ENCODE measurements at regions of chr9 and their contacts with region 1.

Region 1: DNA sequence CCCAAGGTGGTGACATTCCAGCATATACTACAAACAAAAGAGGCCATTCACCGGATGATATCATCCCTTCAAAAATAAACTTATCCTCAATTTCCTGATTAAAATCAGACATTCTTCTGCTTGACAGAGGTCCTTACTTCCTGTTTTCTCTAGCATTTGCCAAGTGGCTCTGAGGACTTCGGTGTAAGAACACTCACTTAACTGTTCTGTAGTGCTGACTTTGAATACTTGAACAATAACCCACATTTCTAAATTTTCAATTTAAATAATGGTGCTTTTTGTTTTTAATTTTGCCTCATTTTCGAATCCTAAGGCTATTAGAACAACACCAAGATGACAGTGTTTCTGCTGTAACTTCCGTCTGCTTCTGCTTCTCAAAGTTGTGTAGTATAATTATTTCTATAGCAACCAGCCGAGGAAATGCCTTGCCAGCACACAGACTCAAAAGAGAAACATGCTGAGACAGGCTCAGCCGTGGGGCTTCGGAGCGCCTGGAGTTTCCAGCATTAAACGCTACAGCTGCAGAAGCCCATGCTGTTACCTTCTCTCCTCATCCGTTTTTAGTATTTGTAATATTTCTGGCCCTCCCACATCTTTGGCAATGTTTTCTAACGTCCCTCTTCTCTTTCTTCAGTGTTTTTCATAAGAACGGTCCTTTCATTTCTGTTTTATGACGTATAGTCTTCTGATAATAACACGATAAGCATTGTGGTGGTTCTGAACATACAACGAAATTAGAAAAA is 19.5 kb upstream of the ANXA1 start:
- DNase-seq: peak; percentile 71 to 78 (median 76)
- ATAC-seq: peak; percentile 76 to 97 (median 93)
- H3K4me3 ChIP-seq: peak overlapping the region; percentile 7 to 64 (median 52)
- H3K27ac ChIP-seq: peak overlapping the region; percentile 6 to 94 (median 76)
- H3K4me1 ChIP-seq: peaks cover 0 to 24% (median 13%) of the 10 kb centered on the region in 12 donors
- H3K27me3 ChIP-seq: no peaks in the 10 kb centered on the region
- CTCF ChIP-seq: no peak
- POLR2A ChIP-seq: no peak

Region 2: DNA sequence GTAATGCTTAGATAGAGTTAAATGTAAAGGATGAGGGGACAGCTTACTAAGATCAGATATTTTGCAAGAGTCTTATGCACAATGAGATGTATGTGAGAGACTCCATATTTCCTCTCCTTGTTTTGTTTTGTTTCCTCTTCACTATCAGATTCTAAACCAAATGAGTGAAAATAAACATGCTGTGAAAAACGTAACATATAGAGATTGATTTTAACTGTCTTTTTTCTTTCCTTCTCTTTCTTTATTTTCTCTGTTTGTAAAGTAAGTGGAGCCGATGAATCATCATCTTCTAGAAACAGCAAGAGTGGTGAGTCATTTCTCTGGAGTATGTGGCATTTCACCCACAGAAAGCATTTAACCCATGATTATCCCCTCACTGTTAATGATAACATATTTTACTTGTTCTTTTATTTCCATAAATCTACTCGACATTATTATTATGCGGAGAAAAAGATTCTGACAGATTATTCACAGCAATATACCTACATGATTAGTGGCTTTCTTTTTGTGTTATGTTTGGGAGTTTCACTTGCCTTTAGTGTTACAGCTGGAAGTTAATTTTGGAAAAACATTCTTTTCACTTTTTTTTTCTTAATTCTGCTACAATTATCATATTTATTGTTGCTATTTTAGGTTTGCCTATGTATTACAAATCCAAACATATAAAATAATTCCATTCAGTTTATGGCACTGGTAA is 17.3 kb after region 1 on chr9:
- intact Hi-C with region 1: loop called in 3 of 10 experiments (anchors 1 to 2 kb)
- DNase-seq: no peak
- ATAC-seq: peak in 2 of 4 donors; percentile 56 to 73
- H3K4me3 ChIP-seq: peak overlapping the region in 3 of 12 donors; percentile 3 to 32 (median 25)
- H3K27ac ChIP-seq: peak overlapping the region in 11 of 12 donors; percentile 2 to 89 (median 41)
- H3K4me1 ChIP-seq: peaks cover 0 to 62% (median 21%) of the 10 kb centered on the region in 12 donors
- H3K27me3 ChIP-seq: no peaks in the 10 kb centered on the region
- CTCF ChIP-seq: no peak
- POLR2A ChIP-seq: no peak

Measured in heart left ventricle (tissue), 16 donors.